HCT116 (cell line): ENCODE measurements at regions of chr4 and their contacts with region 1.

Region 1: GRCh38 chr4:85787138-85787537 is 312.2 kb downstream of the ARHGAP24 start:
- DNase-seq: no peak
- ATAC-seq: no peak
- H3K4me3 ChIP-seq: no peak overlapping the region
- H3K27ac ChIP-seq: no peak overlapping the region
- H3K4me1 ChIP-seq: no peaks in the 10 kb centered on the region
- H3K27me3 ChIP-seq: no peaks in the 10 kb centered on the region
- CTCF ChIP-seq: no peak
- POLR2A ChIP-seq: no peak
- RAD21 ChIP-seq: no peak

Region 2: GRCh38 chr4:86223472-86223871 is 436.3 kb after region 1 on chr4:
- CTCF ChIA-PET with region 1: no interaction called
- POLR2A ChIA-PET with region 1: no interaction called
- RAD21 ChIA-PET with region 1: no interaction called
- intact Hi-C with region 1: loop called (anchors 10 kb)
- DNase-seq: peak; percentile 66
- ATAC-seq: peak; percentile 99
- H3K4me3 ChIP-seq: no peak overlapping the region
- H3K27ac ChIP-seq: no peak overlapping the region
- H3K4me1 ChIP-seq: no peaks in the 10 kb centered on the region
- H3K27me3 ChIP-seq: no peaks in the 10 kb centered on the region
- CTCF ChIP-seq: peak; percentile 71 to 82 (median 81)
- POLR2A ChIP-seq: no peak
- RAD21 ChIP-seq: peak; percentile 62